ENCODE measurements at regions of chr14 and their contacts with region 1.

Region 1: DNA sequence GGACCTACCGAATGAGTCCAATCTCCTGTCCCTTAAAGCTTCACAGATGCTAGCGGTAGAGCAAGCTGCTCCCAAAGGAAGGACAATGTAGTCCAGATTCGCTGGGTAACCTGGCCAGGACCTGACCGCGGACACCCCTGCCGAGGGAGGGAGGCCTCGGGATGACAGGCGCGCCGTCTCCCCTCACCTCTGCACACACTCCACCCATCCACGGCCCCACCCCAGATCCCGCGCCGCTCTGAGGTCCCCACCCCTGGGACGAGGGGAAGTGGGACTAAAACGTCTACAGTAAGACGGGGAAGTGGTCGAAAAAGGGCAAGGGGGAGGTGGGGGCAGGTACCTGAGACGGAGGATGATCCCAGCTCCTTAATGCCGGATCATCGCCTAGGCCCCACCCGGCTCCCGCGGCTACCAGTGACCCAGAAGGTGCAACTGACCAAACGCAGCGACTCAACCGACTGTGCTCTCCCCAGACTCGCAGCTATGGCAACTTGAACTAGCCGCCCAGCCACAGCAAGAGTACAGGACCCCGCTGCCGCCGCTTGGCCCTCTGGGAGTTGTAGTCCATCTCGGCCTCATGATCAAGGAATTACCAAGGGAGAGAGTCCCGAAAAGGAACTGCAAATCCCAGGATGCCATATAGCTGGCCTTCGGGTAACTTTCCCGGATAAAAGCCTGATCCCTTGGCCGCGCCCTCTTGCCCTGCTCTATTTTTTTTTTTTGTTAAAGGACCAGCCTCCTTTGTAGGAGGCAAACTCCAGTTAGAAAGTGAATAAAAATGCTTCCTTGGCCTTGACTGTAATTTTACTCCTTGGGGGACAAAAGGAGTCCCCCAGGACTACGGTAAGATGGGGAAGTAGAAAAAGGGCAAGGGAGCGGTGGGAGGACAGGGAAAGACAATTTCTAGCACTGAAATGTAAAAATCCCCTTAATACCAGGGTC is at the start of gene CEP128:
- DNase-seq: peak; percentile 79
- H3K4me3 Mint-ChIP-seq: peak within 1 kb of the TSS; percentile 88
- H3K27ac Mint-ChIP-seq: peak within 1 kb of the TSS; percentile 88
- H3K4me1 Mint-ChIP-seq: peaks cover 30% of the 10 kb centered on the region
- H3K27me3 Mint-ChIP-seq: no peaks in the 10 kb centered on the region
- total RNA-seq, gene CEP128: 18.2 and 22.0 TPM in 2 replicates

Region 2: GRCh38 chr14:80587075-80587724 is 354.3 kb before region 1 on chr14:
- intact Hi-C with region 1: loop called (anchors 5 kb)
- DNase-seq: no peak
- H3K4me3 Mint-ChIP-seq: no peak overlapping the region
- H3K27ac Mint-ChIP-seq: peak overlapping the region; percentile 65
- H3K4me1 Mint-ChIP-seq: peaks cover 10% of the 10 kb centered on the region
- H3K27me3 Mint-ChIP-seq: peaks cover 3% of the 10 kb centered on the region

Region 3: DNA sequence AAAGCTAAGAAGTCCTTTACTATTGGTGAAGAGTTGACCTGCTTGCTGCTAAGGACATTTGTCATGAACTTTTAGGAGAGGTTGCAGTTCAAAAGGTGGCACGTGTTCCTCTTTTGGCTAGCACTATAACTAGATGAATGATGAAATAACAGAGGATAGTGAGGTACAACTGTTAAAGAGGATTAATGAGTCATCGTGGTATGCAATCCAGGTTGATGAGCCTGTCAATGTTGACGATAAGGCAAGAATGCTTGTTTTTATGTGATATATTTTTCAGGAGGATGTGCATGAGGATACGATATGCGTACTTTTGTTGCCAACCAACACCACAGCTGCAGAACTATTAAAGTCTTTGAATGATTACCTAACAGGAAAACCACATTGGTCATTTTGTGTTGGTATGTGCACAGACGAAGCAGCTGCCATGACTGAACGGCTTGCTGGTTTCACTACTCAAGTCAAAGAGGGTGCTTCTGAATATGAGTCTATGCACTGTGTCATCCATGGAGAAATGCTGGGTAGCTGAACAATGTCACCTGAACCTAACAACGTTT is 10.6 kb before region 1 on chr14:
- intact Hi-C with region 1: loop called (anchors 1 kb)
- DNase-seq: peak; percentile 55
- H3K4me3 Mint-ChIP-seq: peak overlapping the region; percentile 27
- H3K27ac Mint-ChIP-seq: peak overlapping the region; percentile 64
- H3K4me1 Mint-ChIP-seq: peaks cover 58% of the 10 kb centered on the region
- H3K27me3 Mint-ChIP-seq: no peaks in the 10 kb centered on the region

Region 4: GRCh38 chr14:81384900-81385299 is 443.4 kb after region 1 on chr14:
- intact Hi-C with region 1: no loop called
- DNase-seq: no peak
- H3K4me3 Mint-ChIP-seq: no peak overlapping the region
- H3K27ac Mint-ChIP-seq: no peak overlapping the region
- H3K4me1 Mint-ChIP-seq: no peaks in the 10 kb centered on the region
- H3K27me3 Mint-ChIP-seq: peaks cover 4% of the 10 kb centered on the region